Esophagus muscularis mucosa (tissue), 4 donors: ENCODE measurements at regions of chr17 and their contacts with region 1.

Region 1: GRCh38 chr17:1673041-1673785 is 11.5 kb downstream of the PRPF8 start:
- DNase-seq: no peak
- H3K4me3 ChIP-seq: no peak overlapping the region
- H3K27ac ChIP-seq: peak overlapping the region in 1 of 4 donors; percentile 10
- H3K4me1 ChIP-seq: peaks cover 17 to 27% (median 25%) of the 10 kb centered on the region in 4 donors
- H3K27me3 ChIP-seq: no peaks in the 10 kb centered on the region
- CTCF ChIP-seq: no peak
- EP300 ChIP-seq: no peak
- POLR2A ChIP-seq: no peak

Region 2: GRCh38 chr17:1275962-1276736 is 397.1 kb before region 1 on chr17:
- intact Hi-C with region 1: no loop called
- DNase-seq: peak; percentile 93
- H3K4me3 ChIP-seq: no peak overlapping the region
- H3K27ac ChIP-seq: no peak overlapping the region
- H3K4me1 ChIP-seq: peaks cover 0 to 14% (median 9%) of the 10 kb centered on the region in 4 donors
- H3K27me3 ChIP-seq: peaks cover 0 to 56% (median 7%) of the 10 kb centered on the region in 4 donors
- CTCF ChIP-seq: peak; percentile 69 to 88 (median 82)
- EP300 ChIP-seq: no peak
- POLR2A ChIP-seq: no peak

Region 3: DNA sequence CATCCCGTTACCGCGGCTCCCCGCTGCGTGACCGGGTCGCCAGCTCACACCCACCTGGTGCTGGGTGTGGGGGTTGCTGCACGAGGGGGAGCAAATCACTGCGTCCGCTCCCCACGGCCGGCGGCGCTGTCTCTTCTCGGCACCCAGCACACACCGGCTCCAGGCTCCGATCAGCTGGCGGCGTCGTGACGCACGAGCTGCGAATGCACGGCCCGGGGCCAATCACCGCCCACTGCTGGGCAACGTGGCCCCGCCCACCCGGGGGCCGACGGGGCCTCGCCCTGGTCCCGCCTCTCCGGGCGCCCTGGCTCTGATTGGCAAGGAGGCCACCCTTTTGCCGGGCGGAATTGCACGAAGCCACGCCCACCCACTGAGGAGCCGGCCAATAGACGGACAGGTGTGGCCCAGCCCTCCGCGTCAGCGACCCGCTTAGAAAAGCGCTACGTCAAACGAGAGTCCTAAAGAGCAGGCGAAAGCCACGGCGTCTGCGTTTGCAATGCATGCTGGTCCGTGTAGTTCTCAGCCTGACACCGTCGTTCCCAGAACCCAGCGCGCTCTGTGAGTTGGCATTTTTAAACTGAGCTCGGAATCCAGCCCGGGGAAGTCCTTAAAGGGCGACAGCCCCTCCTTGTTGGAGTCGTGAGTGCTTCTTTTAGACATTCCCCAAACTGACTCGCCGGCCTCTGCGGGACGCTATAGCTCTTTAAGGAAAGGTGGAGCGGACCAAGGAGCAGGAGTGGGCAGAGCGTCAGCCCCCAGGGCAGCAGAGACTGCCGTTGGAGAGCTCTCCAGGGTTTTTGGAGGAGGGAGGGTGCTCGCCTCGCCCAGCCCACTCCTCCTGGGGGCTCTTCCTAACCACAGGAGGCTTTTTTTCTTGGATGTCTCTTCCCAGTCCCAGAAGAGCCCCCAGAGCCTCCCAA is 43.1 kb after region 1 on chr17:
- intact Hi-C with region 1: loop called (anchors 2 kb)
- DNase-seq: peak; percentile 100
- H3K4me3 ChIP-seq: peak overlapping the region; percentile 91 to 100 (median 96)
- H3K27ac ChIP-seq: peak overlapping the region; percentile 99 to 100 (median 100)
- H3K4me1 ChIP-seq: peaks cover 55 to 69% (median 60%) of the 10 kb centered on the region in 4 donors
- H3K27me3 ChIP-seq: no peaks in the 10 kb centered on the region
- CTCF ChIP-seq: peak in 1 of 3 experiments; percentile 27
- EP300 ChIP-seq: peak; percentile 23
- POLR2A ChIP-seq: peak; percentile 100

Region 4: GRCh38 chr17:1783834-1784611 is 110.8 kb after region 1 on chr17:
- intact Hi-C with region 1: loop called (anchors 5 kb)
- DNase-seq: peak; percentile 97
- H3K4me3 ChIP-seq: peak overlapping the region in 2 of 4 donors; percentile 19 to 25
- H3K27ac ChIP-seq: peak overlapping the region; percentile 83 to 90 (median 87)
- H3K4me1 ChIP-seq: peaks cover 53 to 76% (median 69%) of the 10 kb centered on the region in 4 donors
- H3K27me3 ChIP-seq: no peaks in the 10 kb centered on the region
- CTCF ChIP-seq: peak; percentile 61 to 77 (median 73)
- EP300 ChIP-seq: peak; percentile 42
- POLR2A ChIP-seq: no peak